Posterior vena cava (tissue), 2 donors: ENCODE measurements at regions of chr3 and their contacts with region 1.

Region 1: DNA sequence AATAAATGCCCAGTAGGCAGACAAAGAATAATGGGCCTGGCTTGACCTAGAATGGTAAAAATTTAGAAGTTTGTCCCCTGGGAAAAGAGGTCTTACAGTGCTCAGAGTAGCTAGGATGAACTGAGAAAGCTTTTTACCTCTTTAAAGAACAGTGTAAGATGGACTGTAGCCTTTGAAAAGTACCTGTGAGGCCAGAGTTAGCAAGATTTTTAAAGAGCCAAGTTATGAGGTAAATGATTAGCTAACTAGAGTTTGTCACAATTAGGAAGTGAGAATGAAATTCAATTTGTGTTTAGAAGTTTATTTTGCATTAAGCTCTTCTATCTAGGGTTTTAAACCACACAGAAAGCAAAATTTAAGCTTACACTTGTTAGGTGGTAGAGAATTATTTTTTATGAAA is 480.9 kb downstream of the ZIC1 start:
- DNase-seq: no peak

Region 2: GRCh38 chr3:147311716-147312115 is 578.4 kb before region 1 on chr3:
- intact Hi-C with region 1: loop called in 1 of 2 experiments (anchors 5 kb)
- DNase-seq: no peak

Region 3: GRCh38 chr3:148186881-148187280 is 296.8 kb after region 1 on chr3:
- intact Hi-C with region 1: no loop called
- DNase-seq: no peak